A673 (cell line): ENCODE measurements at regions of chr11 and their contacts with region 1.

Region 1: GRCh38 chr11:46338988-46339666 is 8.1 kb upstream of the DGKZ start:
- DNase-seq: peak; percentile 89
- H3K4me3 ChIP-seq: no peak overlapping the region
- H3K27ac ChIP-seq: peak overlapping the region; percentile 5
- H3K4me1 ChIP-seq: peaks cover 48% of the 10 kb centered on the region
- H3K27me3 ChIP-seq: no peaks in the 10 kb centered on the region
- CTCF ChIP-seq: no peak

Region 2: DNA sequence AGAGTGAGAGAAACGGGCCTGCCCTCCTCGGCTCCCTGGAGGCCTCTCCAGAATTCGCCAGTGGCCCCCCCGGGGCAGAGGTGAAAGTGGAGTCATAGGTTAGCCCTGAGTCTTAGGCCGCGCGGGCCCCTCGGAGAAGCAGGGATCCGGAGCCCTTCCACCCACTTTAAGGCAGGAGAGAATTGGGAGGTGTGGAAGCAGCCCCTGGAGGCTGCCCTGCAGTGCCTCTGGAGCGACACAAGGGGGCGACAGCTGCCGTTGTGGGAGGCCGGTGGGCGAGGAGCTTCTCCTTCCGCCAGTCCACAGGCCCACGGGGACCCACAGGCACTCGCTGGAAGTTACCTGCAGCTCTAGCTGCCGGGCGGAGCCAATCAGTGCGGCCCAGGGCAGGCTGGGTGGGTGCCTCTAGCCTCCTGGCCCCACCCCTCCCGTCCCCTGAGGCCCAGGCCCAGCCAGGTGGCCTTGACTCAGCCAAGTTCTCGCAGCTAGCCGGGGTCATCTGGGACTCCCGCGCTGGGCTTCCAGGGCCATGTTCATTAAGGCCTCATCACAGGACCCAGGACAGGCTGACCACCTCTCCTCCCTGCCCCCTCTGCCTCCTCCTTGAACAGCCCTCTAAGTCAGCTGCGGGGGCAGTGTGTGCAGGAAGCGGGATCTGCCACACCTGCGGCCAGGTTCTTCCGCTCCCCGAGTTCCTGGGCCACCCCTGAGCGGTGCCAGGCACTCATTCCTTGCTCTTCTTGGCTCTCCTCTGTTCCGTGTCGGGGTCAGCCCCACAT is 13.1 kb after region 1 on chr11:
- CTCF ChIA-PET with region 1: interaction called, 10 read pairs
- POLR2A ChIA-PET with region 1: interaction called, 3 read pairs
- intact Hi-C with region 1: no loop called
- DNase-seq: peak; percentile 88
- H3K4me3 ChIP-seq: no peak overlapping the region
- H3K27ac ChIP-seq: peak overlapping the region; percentile 45
- H3K4me1 ChIP-seq: peaks cover 59% of the 10 kb centered on the region
- H3K27me3 ChIP-seq: no peaks in the 10 kb centered on the region
- CTCF ChIP-seq: peak; percentile 100

Region 3: GRCh38 chr11:46560300-46560991 is 221.3 kb after region 1 on chr11:
- CTCF ChIA-PET with region 1: no interaction called
- POLR2A ChIA-PET with region 1: interaction called, 10 read pairs
- intact Hi-C with region 1: no loop called
- DNase-seq: peak; percentile 72
- H3K4me3 ChIP-seq: peak overlapping the region; percentile 40
- H3K27ac ChIP-seq: peak overlapping the region; percentile 76
- H3K4me1 ChIP-seq: peaks cover 32% of the 10 kb centered on the region
- H3K27me3 ChIP-seq: no peaks in the 10 kb centered on the region
- CTCF ChIP-seq: no peak